MCF 10A (cell line): ENCODE measurements at regions of chr10 and their contacts with region 1.

Region 1: DNA sequence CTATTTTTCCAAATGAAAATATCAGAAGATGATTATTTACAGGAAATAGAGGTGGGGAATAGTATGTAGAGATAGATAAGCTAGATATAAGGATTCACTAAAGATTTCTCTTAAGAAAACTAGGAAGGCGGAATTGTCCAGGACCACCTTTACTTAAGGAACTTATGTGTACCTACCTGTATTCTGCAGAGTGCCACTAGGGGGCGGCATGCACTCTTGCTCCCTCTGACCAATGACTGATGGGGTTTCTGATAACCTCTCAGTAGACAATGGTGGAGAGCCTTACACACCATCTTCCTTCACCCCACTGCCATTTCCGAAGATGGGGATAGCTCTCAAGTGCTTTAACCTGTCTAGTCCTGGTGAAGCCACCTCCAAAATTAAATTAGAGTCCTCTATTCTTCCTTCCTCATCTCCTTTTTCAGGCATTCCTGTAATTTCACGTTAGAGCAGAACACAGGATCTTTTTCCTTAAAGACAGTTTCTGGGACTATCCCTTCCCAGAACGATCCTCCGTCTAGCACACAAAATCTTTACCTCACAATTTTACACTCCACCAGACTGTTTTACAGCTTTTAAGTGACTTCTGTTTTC is 453.1 kb downstream of the SORCS1 start:
- DNase-seq: peak; percentile 56
- H3K4me3 Mint-ChIP-seq: no peak overlapping the region
- H3K27ac Mint-ChIP-seq: no peak overlapping the region
- H3K4me1 Mint-ChIP-seq: peaks cover under 1% of the 10 kb centered on the region
- H3K27me3 Mint-ChIP-seq: no peaks in the 10 kb centered on the region
- CTCF ChIP-seq: peak; percentile 89

Region 2: DNA sequence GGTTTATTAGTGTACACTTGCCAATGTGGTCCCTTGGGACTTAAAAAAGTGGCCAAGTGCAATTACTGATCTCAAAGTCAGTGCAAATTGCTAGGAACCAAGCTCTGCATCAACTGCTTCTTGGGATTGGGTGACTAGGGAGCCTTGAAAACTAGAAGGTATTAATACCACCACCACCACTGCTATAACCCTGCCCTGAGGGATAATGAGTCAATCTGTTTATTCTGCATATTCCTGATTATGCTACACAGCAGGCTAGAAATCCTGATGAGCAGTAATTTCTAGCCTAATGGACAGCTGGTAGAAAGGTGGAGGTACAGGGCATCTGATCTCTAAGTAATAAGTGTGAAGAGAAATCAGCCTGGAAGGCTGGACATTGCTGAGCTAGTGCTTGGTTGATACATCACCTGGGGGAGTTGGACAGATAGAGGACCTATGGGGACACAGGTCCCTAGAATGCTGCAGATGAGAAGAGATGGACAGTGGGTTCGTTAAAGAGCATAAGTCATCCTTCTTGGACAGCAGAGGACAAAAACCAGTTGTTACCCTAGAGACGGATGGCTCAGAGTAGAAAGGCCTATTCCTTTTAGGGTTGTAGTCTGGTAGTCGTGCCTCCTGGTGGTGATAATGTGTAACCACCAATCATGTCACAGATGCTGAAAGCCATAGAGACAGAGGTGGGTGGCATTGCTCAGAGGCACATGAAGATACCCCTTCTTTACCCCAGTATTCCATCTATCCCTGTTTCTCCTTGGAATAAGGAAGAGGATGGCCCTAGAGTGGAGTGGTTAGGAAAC is 101.7 kb before region 1 on chr10:
- CTCF ChIA-PET with region 1: no interaction called
- POLR2A ChIA-PET with region 1: no interaction called
- intact Hi-C with region 1: no loop called
- DNase-seq: peak; percentile 47
- H3K4me3 Mint-ChIP-seq: no peak overlapping the region
- H3K27ac Mint-ChIP-seq: no peak overlapping the region
- H3K4me1 Mint-ChIP-seq: peaks cover 30% of the 10 kb centered on the region
- H3K27me3 Mint-ChIP-seq: no peaks in the 10 kb centered on the region
- CTCF ChIP-seq: peak; percentile 27

Region 3: DNA sequence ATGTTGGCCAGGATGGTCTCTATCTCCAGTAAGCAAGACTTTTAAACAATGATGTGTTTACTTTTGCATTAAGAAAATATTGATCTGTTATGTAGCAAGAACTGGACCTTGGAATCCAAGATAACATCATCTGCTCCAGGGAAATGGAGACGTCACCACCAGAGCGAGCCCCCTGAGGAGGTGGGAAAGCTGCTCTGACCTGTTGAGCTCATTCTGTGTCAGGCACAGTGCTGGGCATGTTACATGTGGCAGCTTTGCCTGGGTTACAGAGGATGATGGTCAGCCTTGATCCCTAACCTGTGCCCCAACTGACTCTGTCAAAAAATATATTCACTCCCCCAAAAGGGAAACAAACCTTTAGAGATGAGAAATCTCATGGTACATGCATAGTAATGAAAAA is 16.8 kb after region 1 on chr10:
- CTCF ChIA-PET with region 1: interaction called, 13 read pairs
- POLR2A ChIA-PET with region 1: no interaction called
- intact Hi-C with region 1: no loop called
- DNase-seq: no peak
- H3K4me3 Mint-ChIP-seq: no peak overlapping the region
- H3K27ac Mint-ChIP-seq: no peak overlapping the region
- H3K4me1 Mint-ChIP-seq: peaks cover 5% of the 10 kb centered on the region
- H3K27me3 Mint-ChIP-seq: no peaks in the 10 kb centered on the region
- CTCF ChIP-seq: no peak